Heart left ventricle (tissue), 16 donors: ENCODE measurements at regions of chr11 and their contacts with region 1.

Region 1: DNA sequence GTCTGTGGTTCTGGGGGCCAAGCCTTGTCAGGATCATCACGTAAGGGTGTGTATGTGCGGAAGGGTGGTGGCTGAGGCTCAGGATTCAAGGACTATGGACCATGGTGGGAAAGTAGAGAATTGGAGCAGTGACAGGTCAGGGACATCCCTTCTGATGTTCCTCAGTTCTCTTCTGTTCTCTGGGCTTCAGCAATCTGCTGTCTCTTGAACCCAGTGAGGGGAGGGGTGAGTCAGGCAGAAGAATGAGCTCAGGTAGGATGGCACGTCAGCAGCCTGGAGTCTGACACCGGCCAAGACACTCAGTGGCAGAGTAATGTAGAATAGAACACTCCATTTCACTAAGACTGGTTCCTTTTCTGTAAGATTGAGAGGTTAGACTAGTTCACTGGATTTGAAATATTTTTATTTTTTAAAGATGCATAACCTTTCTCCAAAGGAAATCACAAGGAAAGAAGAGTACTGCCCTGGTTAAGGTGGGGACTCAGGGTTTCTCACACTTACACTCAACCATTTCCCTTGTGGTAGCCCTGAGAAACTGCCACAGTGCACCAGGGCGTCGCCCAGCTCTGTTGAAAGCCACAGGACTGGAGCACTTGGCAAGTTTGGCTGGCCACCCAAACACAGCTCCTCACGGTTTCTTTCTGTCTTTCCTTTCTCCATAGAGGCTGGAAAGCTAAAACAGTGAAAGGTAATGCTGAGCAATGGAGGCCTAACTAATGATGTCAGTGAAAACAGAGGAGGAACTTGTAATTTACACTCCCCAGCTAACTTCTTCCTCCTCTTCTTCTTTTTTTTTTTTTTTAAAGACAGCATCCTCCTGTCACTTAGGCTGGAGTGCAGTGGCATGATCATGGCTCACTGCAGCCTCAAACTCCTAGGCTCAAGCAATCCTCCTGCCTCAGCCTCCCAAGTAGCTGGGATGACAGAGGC is 23.1 kb upstream of the MICAL2 start:
- DNase-seq: no peak
- ATAC-seq: peak in 2 of 4 donors; percentile 11 to 16
- H3K4me3 ChIP-seq: peak overlapping the region in 2 of 12 donors; percentile 13 to 20
- H3K27ac ChIP-seq: peak overlapping the region; percentile 73 to 96 (median 85)
- H3K4me1 ChIP-seq: peaks cover 12 to 75% (median 65%) of the 10 kb centered on the region in 12 donors
- H3K27me3 ChIP-seq: no peaks in the 10 kb centered on the region
- CTCF ChIP-seq: no peak
- POLR2A ChIP-seq: no peak

Region 2: DNA sequence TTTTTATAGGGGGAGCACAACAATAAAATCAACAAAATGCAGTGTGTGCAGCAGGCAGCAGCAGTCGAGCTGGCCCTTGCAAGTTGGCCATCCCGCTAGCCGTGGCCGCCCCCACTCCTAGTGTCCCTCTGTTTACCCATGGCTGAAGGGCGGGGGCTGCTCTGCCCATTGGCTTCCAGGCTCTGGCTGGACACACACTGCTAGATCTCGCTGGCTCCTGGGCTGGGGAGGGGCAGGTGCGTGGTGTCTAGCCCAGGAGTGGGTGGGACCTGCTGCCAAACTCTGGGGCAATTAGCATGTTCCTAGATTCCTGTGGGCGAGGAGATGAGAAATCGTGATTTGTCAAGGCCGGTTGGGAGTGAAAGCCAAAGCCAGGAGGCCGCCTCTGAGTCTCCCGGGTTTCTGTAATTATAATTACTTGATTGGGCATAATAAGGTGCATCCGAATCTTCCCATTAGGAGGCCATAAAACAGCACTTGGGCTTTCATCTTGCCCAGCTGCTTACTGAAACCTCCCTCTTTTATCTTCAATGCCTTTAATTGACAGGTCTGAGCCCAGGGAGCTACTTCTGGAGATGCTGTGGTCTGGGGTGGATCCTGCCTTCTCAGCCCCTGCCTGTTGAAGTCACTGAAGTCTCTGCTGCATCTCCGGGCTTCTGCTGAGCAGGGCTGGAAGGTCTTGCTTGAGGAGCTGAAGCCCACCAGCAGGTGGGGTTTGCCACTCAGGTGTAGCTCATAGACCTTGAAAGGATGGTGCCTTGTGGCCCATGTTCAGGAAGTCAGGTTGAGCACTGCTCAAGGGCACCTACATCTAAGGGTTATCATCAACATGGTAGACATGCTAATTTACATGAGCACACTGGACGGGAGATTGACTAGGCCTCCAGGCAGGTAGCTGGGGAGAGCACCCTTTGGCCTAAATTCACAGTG is 34.4 kb before region 1 on chr11:
- intact Hi-C with region 1: loop called in 3 of 10 experiments (anchors 5 kb)
- DNase-seq: no peak
- ATAC-seq: no peak
- H3K4me3 ChIP-seq: no peak overlapping the region
- H3K27ac ChIP-seq: peak overlapping the region in 1 of 12 donors; percentile 21
- H3K4me1 ChIP-seq: peaks cover 0 to 24% (median 10%) of the 10 kb centered on the region in 12 donors
- H3K27me3 ChIP-seq: no peaks in the 10 kb centered on the region
- CTCF ChIP-seq: no peak
- POLR2A ChIP-seq: no peak

Region 3: GRCh38 chr11:12167098-12168000 is 80.0 kb after region 1 on chr11:
- intact Hi-C with region 1: no loop called
- DNase-seq: peak in 3 of 5 donors; percentile 40 to 47 (median 47)
- ATAC-seq: peak in 3 of 4 donors; percentile 17 to 29 (median 19)
- H3K4me3 ChIP-seq: no peak overlapping the region
- H3K27ac ChIP-seq: peak overlapping the region in 11 of 12 donors; percentile 12 to 94 (median 84)
- H3K4me1 ChIP-seq: peaks cover 0 to 95% (median 56%) of the 10 kb centered on the region in 12 donors
- H3K27me3 ChIP-seq: no peaks in the 10 kb centered on the region
- CTCF ChIP-seq: no peak
- POLR2A ChIP-seq: no peak

Region 4: DNA sequence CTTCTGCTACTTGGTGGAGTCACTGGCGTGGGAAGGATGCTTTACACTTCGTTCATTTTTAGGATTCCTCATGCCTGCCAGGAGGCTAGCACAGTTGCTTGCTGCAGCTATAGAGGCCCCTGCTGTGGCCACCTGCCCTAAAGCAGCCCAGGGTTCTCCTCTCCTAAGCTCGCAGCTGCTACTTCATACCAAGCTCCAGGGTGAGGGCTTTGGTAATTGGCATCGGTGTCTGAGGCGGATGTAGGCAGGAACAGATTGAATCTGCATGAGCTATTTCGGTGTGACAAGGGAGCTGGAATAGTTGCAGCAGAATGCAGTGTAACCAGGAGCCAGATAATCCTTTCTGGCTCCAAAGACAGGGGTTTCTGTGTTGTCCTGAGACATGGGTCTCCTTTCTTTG is 156.1 kb after region 1 on chr11:
- intact Hi-C with region 1: loop called in 5 of 10 experiments (anchors 2 to 10 kb)
- DNase-seq: no peak
- ATAC-seq: peak in 1 of 4 donors; percentile 7
- H3K4me3 ChIP-seq: no peak overlapping the region
- H3K27ac ChIP-seq: peak overlapping the region in 3 of 12 donors; percentile 3 to 28 (median 18)
- H3K4me1 ChIP-seq: peaks cover 0 to 79% (median 29%) of the 10 kb centered on the region in 12 donors
- H3K27me3 ChIP-seq: no peaks in the 10 kb centered on the region
- CTCF ChIP-seq: no peak
- POLR2A ChIP-seq: no peak